ENCODE measurements at regions of chr15 and their contacts with region 1.

Region 1: DNA sequence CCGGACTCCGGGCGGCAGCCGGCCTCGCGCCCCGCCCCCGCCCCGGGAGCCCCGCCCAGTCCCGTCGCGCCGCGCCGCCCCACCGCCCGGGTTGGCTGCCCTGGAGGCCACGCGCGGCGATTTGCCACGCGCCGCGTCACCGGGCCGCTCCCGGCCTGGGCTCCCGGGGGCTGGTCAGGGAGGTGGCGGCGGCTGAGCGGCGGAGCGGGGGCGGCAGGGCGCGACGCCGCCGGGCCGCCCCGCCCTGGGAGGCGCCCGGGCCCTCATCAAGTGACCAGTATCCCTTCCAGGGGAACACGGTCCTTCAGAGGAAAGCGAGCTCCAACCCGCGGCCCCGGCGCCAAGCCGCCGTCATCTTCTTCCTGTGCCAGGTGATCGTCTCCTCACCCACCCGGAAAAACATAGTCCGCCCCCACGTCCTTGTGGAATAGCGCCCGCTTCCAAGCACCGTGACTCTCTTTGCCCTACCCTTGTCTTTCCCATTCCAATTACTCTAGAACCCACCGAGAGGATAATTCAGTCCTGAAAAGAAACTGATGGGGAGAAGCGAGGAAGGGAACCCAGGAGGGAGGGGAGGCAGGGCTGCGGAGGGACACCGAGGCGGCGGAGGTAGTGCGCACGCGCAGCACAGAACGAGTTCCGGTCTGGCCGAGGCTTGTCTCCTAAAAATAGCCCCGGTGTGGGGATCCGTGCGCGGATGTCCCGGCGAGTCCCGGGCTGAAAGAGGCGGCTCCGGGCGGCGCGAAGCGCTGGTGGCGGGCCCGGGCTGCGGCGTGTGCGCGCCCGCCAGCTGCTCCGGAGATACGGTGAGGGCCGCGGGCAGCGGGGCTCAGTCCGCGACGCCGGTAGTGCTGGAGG is at the start of gene MEF2A:
- DNase-seq: peak; percentile 96 to 98 (median 97)
- ATAC-seq: peak; percentile 79 to 85 (median 84)
- H3K4me3 ChIP-seq: peak within 1 kb of the TSS; percentile 73 to 97 (median 86)
- H3K27ac ChIP-seq: peak within 1 kb of the TSS; percentile 97 to 100 (median 99)
- H3K4me1 ChIP-seq: peaks cover 6 to 57% (median 35%) of the 10 kb centered on the region in 12 donors
- H3K27me3 ChIP-seq: no peaks in the 10 kb centered on the region
- CTCF ChIP-seq: no peak
- POLR2A ChIP-seq: peak in 1 of 2 donors; percentile 67
- total RNA-seq, gene MEF2A: 131 to 192 (median 160) TPM

Region 2: GRCh38 chr15:99213187-99213811 is 352.2 kb before region 1 on chr15:
- intact Hi-C with region 1: no loop called
- DNase-seq: peak; percentile 75 to 86 (median 77)
- ATAC-seq: peak; percentile 60 to 84 (median 82)
- H3K4me3 ChIP-seq: no peak overlapping the region
- H3K27ac ChIP-seq: peak overlapping the region in 7 of 12 donors; percentile 40 to 85 (median 67)
- H3K4me1 ChIP-seq: peaks cover 0 to 16% (median 0%) of the 10 kb centered on the region in 12 donors
- H3K27me3 ChIP-seq: no peaks in the 10 kb centered on the region
- CTCF ChIP-seq: peak; percentile 80 to 97 (median 92)
- POLR2A ChIP-seq: no peak

Region 3: DNA sequence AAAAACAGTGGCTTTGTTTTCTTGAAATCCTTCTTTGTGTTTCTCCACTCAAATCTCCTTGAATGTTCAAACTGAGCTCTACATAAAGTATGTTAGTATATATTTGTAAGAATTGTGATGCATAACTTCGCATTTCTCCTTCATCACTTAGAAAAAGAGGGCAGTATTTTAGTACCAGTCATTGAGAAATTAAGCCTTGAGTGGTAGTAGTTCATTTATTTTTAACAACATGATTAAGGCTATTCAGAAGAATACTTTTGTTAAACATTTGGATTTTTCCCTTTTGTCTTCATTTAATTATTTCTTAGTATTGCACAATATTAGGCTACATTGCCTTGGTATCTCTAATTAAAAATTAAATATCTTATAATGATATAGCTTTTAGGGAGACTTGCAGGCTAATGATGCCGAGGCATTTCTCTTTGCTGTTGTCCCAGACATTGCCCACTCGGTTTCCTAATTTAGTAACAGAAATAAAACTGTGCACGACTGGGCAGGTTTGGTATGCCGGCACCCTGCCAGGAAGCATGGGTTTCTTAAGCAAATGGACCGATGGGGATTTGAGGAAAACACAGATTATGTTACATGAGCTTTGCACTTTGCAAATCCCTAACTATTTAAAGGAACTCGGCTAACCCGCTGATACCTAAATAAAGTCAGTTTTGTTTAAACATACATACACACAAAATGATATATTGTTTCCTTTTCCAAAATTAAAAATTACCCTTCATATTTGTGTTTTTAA is 259.6 kb before region 1 on chr15:
- intact Hi-C with region 1: loop called in 1 of 10 experiments (anchors 5 kb)
- DNase-seq: peak; percentile 55 to 75 (median 61)
- ATAC-seq: peak; percentile 59 to 75 (median 64)
- H3K4me3 ChIP-seq: peak overlapping the region in 7 of 12 donors; percentile 4 to 30 (median 22)
- H3K27ac ChIP-seq: peak overlapping the region in 11 of 12 donors; percentile 15 to 84 (median 56)
- H3K4me1 ChIP-seq: peaks cover 0 to 24% (median 6%) of the 10 kb centered on the region in 12 donors
- H3K27me3 ChIP-seq: no peaks in the 10 kb centered on the region
- CTCF ChIP-seq: no peak
- POLR2A ChIP-seq: no peak

Region 4: GRCh38 chr15:99324082-99324620 is 241.4 kb before region 1 on chr15:
- intact Hi-C with region 1: no loop called
- DNase-seq: peak in 2 of 5 donors; percentile 23 to 34
- ATAC-seq: peak; percentile 88 to 94 (median 92)
- H3K4me3 ChIP-seq: peak overlapping the region in 1 of 12 donors; percentile 10
- H3K27ac ChIP-seq: peak overlapping the region in 11 of 12 donors; percentile 5 to 62 (median 47)
- H3K4me1 ChIP-seq: peaks cover 0 to 24% (median 10%) of the 10 kb centered on the region in 12 donors
- H3K27me3 ChIP-seq: no peaks in the 10 kb centered on the region
- CTCF ChIP-seq: no peak
- POLR2A ChIP-seq: peak in 1 of 2 donors; percentile 24

Region 5: GRCh38 chr15:99424978-99425656 is 140.4 kb before region 1 on chr15:
- intact Hi-C with region 1: loop called in 1 of 10 experiments (anchors 5 kb)
- DNase-seq: peak in 4 of 5 donors; percentile 55 to 78 (median 76)
- ATAC-seq: peak; percentile 75 to 94 (median 90)
- H3K4me3 ChIP-seq: peak overlapping the region in 1 of 12 donors; percentile 9
- H3K27ac ChIP-seq: peak overlapping the region; percentile 80 to 96 (median 90)
- H3K4me1 ChIP-seq: peaks cover 8 to 38% (median 25%) of the 10 kb centered on the region in 12 donors
- H3K27me3 ChIP-seq: no peaks in the 10 kb centered on the region
- CTCF ChIP-seq: no peak
- POLR2A ChIP-seq: peak in 1 of 2 donors; percentile 21

Region 6: DNA sequence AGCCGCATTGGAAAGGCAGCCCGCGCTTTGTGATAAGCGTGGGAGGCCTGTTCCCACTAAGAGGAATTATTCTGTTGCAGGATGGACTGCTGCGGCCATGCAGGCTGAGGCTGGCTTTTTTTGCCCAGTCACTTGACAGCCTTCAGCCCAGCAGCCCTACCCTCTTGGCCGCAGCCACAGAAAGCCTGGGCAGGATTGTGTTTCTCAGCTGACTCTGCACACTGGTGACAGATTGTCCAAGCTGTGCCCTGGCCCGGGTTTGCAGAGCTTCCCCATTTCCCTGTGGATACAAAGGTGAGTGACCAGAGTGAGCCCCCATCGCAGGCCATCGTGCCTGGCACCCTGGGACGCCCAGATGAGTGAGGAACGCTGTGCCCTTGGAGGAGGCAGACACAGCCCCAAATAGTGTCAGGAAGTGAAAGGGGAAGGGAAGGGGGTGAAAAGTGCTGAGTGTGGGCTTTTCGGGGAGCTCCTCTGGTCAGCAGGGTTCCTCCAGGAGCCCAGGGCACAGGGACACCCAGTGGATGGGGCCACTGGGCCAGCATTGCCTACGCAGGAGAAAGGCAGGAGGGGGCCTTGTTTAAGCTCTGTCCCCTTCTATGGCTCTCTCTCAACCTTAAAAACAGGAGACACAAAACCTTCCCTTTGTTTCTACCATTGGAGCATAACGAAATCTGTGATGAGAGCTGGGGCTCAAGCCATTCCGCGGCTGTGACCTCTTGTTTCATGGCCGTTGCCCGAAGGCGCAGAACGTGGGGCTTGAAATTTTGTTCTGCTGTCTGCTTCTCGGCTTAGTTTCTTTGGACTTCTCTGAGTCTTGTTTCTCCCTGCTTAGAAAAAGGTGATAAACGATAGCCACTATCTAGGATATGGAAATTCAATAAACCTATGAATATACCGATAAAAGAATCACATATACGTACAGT is 91.3 kb before region 1 on chr15:
- intact Hi-C with region 1: loop called in 1 of 10 experiments (anchors 5 kb)
- DNase-seq: peak; percentile 74 to 87 (median 76)
- ATAC-seq: peak; percentile 68 to 90 (median 84)
- H3K4me3 ChIP-seq: peak overlapping the region in 5 of 12 donors; percentile 3 to 37 (median 32)
- H3K27ac ChIP-seq: peak overlapping the region; percentile 59 to 88 (median 78)
- H3K4me1 ChIP-seq: peaks cover 0 to 66% (median 54%) of the 10 kb centered on the region in 12 donors
- H3K27me3 ChIP-seq: no peaks in the 10 kb centered on the region
- CTCF ChIP-seq: no peak
- POLR2A ChIP-seq: peak in 1 of 2 donors; percentile 17

Region 7: DNA sequence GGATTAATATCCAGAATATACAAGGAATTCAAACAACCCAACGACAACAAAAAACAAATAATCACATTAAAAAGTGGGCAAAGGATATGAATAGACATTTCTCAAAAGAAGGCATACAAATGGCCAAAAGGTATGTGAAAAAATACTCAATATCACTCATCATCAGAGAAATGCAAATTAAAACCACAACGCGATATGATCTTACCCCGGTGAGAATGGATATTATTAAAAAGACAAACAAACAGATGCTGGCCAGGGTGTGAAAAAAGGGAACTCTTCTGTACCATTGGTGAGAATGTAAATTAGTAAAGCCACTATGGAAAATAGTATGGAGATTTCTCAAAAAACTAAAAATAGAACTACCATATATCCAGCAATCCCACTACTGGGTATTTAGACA is 43.2 kb before region 1 on chr15:
- intact Hi-C with region 1: no loop called
- DNase-seq: no peak
- ATAC-seq: no peak
- H3K4me3 ChIP-seq: no peak overlapping the region
- H3K27ac ChIP-seq: no peak overlapping the region
- H3K4me1 ChIP-seq: no peaks in the 10 kb centered on the region
- H3K27me3 ChIP-seq: no peaks in the 10 kb centered on the region
- CTCF ChIP-seq: no peak
- POLR2A ChIP-seq: no peak

Region 8: GRCh38 chr15:99631255-99631654 is 65.7 kb after region 1 on chr15:
- intact Hi-C with region 1: no loop called
- DNase-seq: no peak
- ATAC-seq: peak; percentile 56 to 80 (median 66)
- H3K4me3 ChIP-seq: no peak overlapping the region
- H3K27ac ChIP-seq: peak overlapping the region in 11 of 12 donors; percentile 12 to 86 (median 48)
- H3K4me1 ChIP-seq: peaks cover 4 to 89% (median 61%) of the 10 kb centered on the region in 12 donors
- H3K27me3 ChIP-seq: no peaks in the 10 kb centered on the region
- CTCF ChIP-seq: no peak
- POLR2A ChIP-seq: no peak

Region 9: DNA sequence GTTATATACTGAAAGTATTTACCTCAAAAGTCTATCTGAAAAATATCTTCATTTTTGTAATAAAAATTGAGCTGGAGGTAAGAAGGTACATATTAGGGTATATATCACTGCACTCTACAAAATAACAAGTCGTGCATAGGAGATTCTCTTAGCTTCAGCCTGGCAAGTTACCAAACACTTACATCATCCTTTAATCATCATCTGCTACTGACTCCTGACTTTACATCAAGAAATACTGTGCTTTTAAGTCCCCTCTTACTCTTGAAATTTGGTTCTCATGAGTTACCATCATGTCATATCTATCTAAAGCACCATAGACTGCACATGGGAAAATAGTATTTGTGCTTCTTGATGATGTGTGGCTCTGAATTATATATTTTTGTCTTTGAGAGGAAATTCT is 116.9 kb after region 1 on chr15:
- intact Hi-C with region 1: loop called in 4 of 10 experiments (anchors 5 to 10 kb)
- DNase-seq: no peak
- ATAC-seq: peak in 2 of 4 donors; percentile 62 to 64
- H3K4me3 ChIP-seq: no peak overlapping the region
- H3K27ac ChIP-seq: peak overlapping the region in 11 of 12 donors; percentile 6 to 80 (median 66)
- H3K4me1 ChIP-seq: peaks cover 3 to 32% (median 20%) of the 10 kb centered on the region in 12 donors
- H3K27me3 ChIP-seq: no peaks in the 10 kb centered on the region
- CTCF ChIP-seq: no peak
- POLR2A ChIP-seq: no peak